ENCODE measurements at regions of chr17 and their contacts with region 1.

Region 1: GRCh38 chr17:77088455-77089123 is 52.2 kb upstream of the SEC14L1 start:
- DNase-seq: peak; percentile 92
- H3K4me3 ChIP-seq: peak overlapping the region; percentile 62 to 76 (median 68)
- H3K27ac ChIP-seq: peak overlapping the region; percentile 88
- H3K4me1 ChIP-seq: peaks cover 14% of the 10 kb centered on the region
- H3K27me3 ChIP-seq: no peaks in the 10 kb centered on the region
- CTCF ChIP-seq: peak; percentile 48 to 53

Region 2: GRCh38 chr17:77140166-77140878 is 51.7 kb after region 1 on chr17:
- CTCF ChIA-PET with region 1: no interaction called
- dilution Hi-C with region 1: no loop called
- in situ Hi-C with region 1: no loop called
- intact Hi-C with region 1: loop called (anchors 2 kb)
- DNase-seq: peak; percentile 97
- H3K4me3 ChIP-seq: peak overlapping the region; percentile 9 to 63 (median 53)
- H3K27ac ChIP-seq: peak overlapping the region; percentile 95
- H3K4me1 ChIP-seq: peaks cover 31% of the 10 kb centered on the region
- H3K27me3 ChIP-seq: no peaks in the 10 kb centered on the region
- CTCF ChIP-seq: peak in 1 of 2 donors; percentile 2

Region 3: GRCh38 chr17:77208217-77208808 is 119.7 kb after region 1 on chr17:
- CTCF ChIA-PET with region 1: no interaction called
- dilution Hi-C with region 1: no loop called
- in situ Hi-C with region 1: no loop called
- intact Hi-C with region 1: loop called (anchors 5 kb)
- DNase-seq: no peak
- H3K4me3 ChIP-seq: no peak overlapping the region
- H3K27ac ChIP-seq: no peak overlapping the region
- H3K4me1 ChIP-seq: no peaks in the 10 kb centered on the region
- H3K27me3 ChIP-seq: no peaks in the 10 kb centered on the region
- CTCF ChIP-seq: no peak

Region 4: DNA sequence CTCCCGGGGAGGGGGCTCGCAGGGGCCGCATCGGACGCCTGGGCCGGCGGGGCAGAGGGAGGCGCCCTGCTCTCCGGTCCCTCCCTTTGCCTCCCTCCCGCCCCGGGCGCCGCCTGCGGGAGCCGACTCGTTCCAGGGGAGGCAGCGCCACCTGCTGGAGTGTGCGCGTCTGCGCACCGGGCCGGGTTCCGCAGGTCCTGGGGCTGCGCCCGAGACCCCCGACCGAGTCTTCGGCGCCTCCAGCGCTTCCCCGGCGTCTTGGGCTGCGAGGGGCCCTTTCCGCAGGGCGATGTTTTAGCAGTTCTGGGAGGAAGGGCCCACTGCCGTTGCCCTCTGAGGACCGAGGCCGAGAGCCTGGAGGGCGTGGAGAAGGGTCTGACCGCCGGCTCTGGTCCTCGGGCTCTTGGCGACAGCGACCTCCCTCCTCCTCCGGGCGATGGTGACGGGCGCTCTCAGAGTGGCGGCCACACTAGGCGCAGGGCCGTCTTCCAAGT is 158.5 kb after region 1 on chr17:
- CTCF ChIA-PET with region 1: no interaction called
- dilution Hi-C with region 1: no loop called
- in situ Hi-C with region 1: loop called (anchors 5 kb)
- intact Hi-C with region 1: loop called (anchors 1 kb)
- DNase-seq: peak; percentile 47
- H3K4me3 ChIP-seq: peak overlapping the region; percentile 43 to 61 (median 47)
- H3K27ac ChIP-seq: no peak overlapping the region
- H3K4me1 ChIP-seq: peaks cover 8% of the 10 kb centered on the region
- H3K27me3 ChIP-seq: no peaks in the 10 kb centered on the region
- CTCF ChIP-seq: peak; percentile 55 to 88

Region 5: GRCh38 chr17:77494664-77495435 is 406.3 kb after region 1 on chr17:
- CTCF ChIA-PET with region 1: no interaction called
- dilution Hi-C with region 1: no loop called
- in situ Hi-C with region 1: no loop called
- intact Hi-C with region 1: loop called (anchors 1 kb)
- DNase-seq: peak; percentile 46
- H3K4me3 ChIP-seq: no peak overlapping the region
- H3K27ac ChIP-seq: no peak overlapping the region
- H3K4me1 ChIP-seq: no peaks in the 10 kb centered on the region
- H3K27me3 ChIP-seq: no peaks in the 10 kb centered on the region
- CTCF ChIP-seq: peak; percentile 68 to 95